ENCODE measurements at regions of chr14 and their contacts with region 1.

Region 1: GRCh38 chr14:103808403-103809001 is 38.9 kb downstream of the PPP1R13B start:
- DNase-seq: peak; percentile 28 to 80 (median 73)
- ATAC-seq: peak; percentile 78
- H3K4me3 ChIP-seq: no peak overlapping the region
- H3K4me3 Mint-ChIP-seq: no peak overlapping the region
- H3K27ac ChIP-seq: no peak overlapping the region
- H3K27ac Mint-ChIP-seq: no peak overlapping the region
- H3K4me1 ChIP-seq: no peaks in the 10 kb centered on the region
- H3K4me1 Mint-ChIP-seq: peaks cover 15% of the 10 kb centered on the region
- H3K27me3 ChIP-seq: no peaks in the 10 kb centered on the region
- H3K27me3 Mint-ChIP-seq: no peaks in the 10 kb centered on the region
- CTCF ChIP-seq: peak; percentile 96

Region 2: GRCh38 chr14:103819503-103820307 is 11.2 kb after region 1 on chr14:
- CTCF ChIA-PET with region 1: interaction called, 17 read pairs
- POLR2A ChIA-PET with region 1: interaction called, 3 read pairs
- intact Hi-C with region 1: no loop called
- DNase-seq: no peak
- ATAC-seq: no peak
- H3K4me3 ChIP-seq: no peak overlapping the region
- H3K4me3 Mint-ChIP-seq: no peak overlapping the region
- H3K27ac ChIP-seq: no peak overlapping the region
- H3K27ac Mint-ChIP-seq: peak overlapping the region; percentile 74
- H3K4me1 ChIP-seq: peaks cover 27% of the 10 kb centered on the region
- H3K4me1 Mint-ChIP-seq: peaks cover 49% of the 10 kb centered on the region
- H3K27me3 ChIP-seq: no peaks in the 10 kb centered on the region
- H3K27me3 Mint-ChIP-seq: no peaks in the 10 kb centered on the region
- CTCF ChIP-seq: no peak

Region 3: GRCh38 chr14:103862393-103862782 is 53.9 kb after region 1 on chr14:
- CTCF ChIA-PET with region 1: no interaction called
- POLR2A ChIA-PET with region 1: no interaction called
- intact Hi-C with region 1: no loop called
- DNase-seq: no peak
- ATAC-seq: no peak
- H3K4me3 ChIP-seq: no peak overlapping the region
- H3K4me3 Mint-ChIP-seq: no peak overlapping the region
- H3K27ac ChIP-seq: no peak overlapping the region
- H3K27ac Mint-ChIP-seq: no peak overlapping the region
- H3K4me1 ChIP-seq: no peaks in the 10 kb centered on the region
- H3K4me1 Mint-ChIP-seq: no peaks in the 10 kb centered on the region
- H3K27me3 ChIP-seq: no peaks in the 10 kb centered on the region
- H3K27me3 Mint-ChIP-seq: peaks cover 9% of the 10 kb centered on the region
- CTCF ChIP-seq: no peak

Region 4: DNA sequence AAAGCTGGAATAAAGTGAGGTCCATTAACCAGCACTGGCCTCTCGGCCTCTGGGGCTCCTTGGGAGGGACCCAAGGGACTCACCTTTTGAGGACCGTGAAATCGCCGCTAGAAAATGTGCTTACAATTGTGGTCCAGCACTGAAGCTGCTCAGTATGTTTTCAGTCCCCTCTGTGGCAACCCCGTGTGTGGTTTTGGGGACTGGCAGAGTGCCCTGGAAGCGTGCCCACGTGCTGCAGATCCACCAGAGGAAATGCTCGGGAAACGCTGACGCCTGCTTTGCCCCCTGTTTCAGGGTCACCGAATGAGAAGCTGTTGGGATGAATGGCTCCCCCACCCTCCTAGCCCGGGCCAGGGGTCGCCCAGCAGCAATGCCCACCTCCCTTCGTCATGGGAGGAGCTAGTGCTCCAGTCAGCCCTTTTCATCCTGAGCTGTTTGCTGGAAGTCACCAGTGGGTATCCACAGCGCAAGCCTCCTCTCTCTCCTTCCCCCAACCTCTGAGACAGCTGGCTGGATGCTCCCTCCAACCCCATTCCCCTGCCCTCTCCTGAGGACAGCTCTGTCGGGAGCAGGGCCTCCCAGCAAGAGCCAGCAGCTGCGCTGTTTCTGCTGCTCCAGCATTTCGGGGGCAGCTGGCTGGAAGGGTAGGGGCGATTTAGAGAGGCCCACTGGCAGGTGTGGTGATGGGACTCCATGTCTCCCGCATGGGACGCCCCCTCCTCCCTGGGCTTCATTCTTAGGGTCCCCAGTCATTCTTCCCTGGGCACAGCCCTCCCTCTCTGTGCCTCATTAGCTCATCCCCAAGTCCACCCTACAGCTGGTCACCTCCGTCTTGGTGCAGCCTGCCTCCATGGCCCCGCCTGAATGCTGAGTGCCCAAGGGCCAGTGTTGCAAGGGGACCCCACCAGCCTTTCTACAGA is 72.1 kb after region 1 on chr14:
- CTCF ChIA-PET with region 1: interaction called, 10 read pairs
- POLR2A ChIA-PET with region 1: no interaction called
- intact Hi-C with region 1: no loop called
- DNase-seq: peak in 8 of 9 experiments; percentile 25 to 74 (median 58)
- ATAC-seq: peak; percentile 70
- H3K4me3 ChIP-seq: peak overlapping the region; percentile 30 to 32
- H3K4me3 Mint-ChIP-seq: peak overlapping the region; percentile 72
- H3K27ac ChIP-seq: no peak overlapping the region
- H3K27ac Mint-ChIP-seq: no peak overlapping the region
- H3K4me1 ChIP-seq: peaks cover 21% of the 10 kb centered on the region
- H3K4me1 Mint-ChIP-seq: peaks cover 21% of the 10 kb centered on the region
- H3K27me3 ChIP-seq: no peaks in the 10 kb centered on the region
- H3K27me3 Mint-ChIP-seq: no peaks in the 10 kb centered on the region
- CTCF ChIP-seq: no peak

Region 5: DNA sequence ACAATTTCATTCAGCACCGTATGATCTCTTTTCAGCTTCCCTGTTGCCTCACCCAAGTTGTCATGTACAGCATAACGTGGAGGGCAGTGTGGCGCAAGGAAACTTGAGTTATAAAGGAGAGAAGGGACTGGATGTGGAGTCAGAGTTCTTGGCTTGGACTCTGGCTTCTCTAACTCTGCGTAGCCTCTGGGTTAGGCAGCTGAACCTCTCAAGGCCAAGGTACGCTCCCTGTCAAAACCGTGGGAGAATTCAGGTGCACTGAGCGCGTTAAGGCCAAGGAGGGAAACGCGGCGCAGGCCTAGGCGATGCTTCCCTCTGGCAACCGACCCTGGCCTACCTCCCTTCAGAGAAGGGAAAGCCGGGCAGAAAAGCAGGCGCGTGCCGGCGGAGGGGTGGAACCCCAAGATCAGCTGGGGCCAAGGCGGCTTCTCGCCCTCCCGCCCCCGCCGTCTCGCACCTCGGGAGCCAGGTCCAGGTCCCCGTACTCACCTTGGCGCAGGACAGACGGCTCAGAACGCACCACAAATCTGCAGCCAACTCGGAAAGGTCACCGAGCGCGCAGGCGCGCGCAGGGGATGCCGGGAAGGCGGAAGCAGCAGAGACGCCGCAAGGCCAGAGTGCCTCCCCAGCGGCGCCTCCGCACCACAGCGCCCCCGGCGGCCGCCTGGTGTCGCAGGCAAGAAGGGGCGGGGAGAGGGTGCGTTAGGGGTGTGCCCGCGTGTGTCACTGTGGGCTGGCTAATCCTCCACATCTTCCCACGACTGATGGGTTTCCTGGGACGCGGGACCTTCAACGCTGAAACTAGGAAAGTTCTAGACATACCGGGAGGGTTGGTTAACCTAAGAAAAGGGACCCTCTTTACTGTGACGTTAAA is 112.7 kb after region 1 on chr14:
- CTCF ChIA-PET with region 1: interaction called, 259 read pairs
- POLR2A ChIA-PET with region 1: no interaction called
- intact Hi-C with region 1: no loop called
- DNase-seq: peak; percentile 90 to 97 (median 94)
- ATAC-seq: peak; percentile 99
- H3K4me3 ChIP-seq: peak overlapping the region; percentile 88 to 91
- H3K4me3 Mint-ChIP-seq: peak overlapping the region; percentile 90
- H3K27ac ChIP-seq: peak overlapping the region; percentile 67 to 71
- H3K27ac Mint-ChIP-seq: peak overlapping the region; percentile 89
- H3K4me1 ChIP-seq: peaks cover 20% of the 10 kb centered on the region
- H3K4me1 Mint-ChIP-seq: peaks cover 24% of the 10 kb centered on the region
- H3K27me3 ChIP-seq: peaks cover 0 to 8% of the 10 kb centered on the region in 2 experiments
- H3K27me3 Mint-ChIP-seq: peaks cover 7% of the 10 kb centered on the region
- CTCF ChIP-seq: peak; percentile 90

Region 6: GRCh38 chr14:104001003-104001402 is 192.5 kb after region 1 on chr14:
- CTCF ChIA-PET with region 1: no interaction called
- POLR2A ChIA-PET with region 1: no interaction called
- intact Hi-C with region 1: loop called in 1 of 2 experiments (anchors 5 kb)
- DNase-seq: peak in 5 of 9 experiments; percentile 13 to 39 (median 29)
- ATAC-seq: peak; percentile 58
- H3K4me3 ChIP-seq: no peak overlapping the region
- H3K4me3 Mint-ChIP-seq: no peak overlapping the region
- H3K27ac ChIP-seq: no peak overlapping the region
- H3K27ac Mint-ChIP-seq: no peak overlapping the region
- H3K4me1 ChIP-seq: no peaks in the 10 kb centered on the region
- H3K4me1 Mint-ChIP-seq: no peaks in the 10 kb centered on the region
- H3K27me3 ChIP-seq: no peaks in the 10 kb centered on the region
- H3K27me3 Mint-ChIP-seq: peaks cover 6% of the 10 kb centered on the region
- CTCF ChIP-seq: no peak

Measured in CD8-positive, alpha-beta T cell (primary cell).